Breast epithelium (tissue), 4 donors: ENCODE measurements at regions of chr3 and their contacts with region 1.

Region 1: DNA sequence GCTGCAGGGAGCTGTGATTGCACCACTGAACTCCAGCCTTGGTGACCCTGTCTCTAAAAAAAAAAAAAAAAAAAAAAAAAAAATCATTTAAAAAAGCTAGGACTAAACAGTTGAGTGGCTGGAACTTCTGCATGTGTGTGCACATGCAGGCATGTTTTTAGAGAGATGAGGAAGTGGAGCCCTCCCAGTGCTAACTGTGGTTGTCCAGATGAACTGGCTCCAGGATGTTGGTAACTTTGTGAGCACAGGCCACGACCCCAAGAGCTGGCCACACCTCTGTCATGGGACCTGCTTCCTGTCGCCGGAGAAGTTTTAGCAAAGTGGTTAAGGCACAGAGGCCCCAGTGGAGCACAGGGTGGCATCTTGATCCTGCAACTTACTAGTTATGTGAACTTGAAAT is 27.0 kb downstream of the CHCHD6 start:
- DNase-seq: no peak
- H3K4me3 ChIP-seq: no peak overlapping the region
- H3K27ac ChIP-seq: no peak overlapping the region
- H3K4me1 ChIP-seq: no peaks in the 10 kb centered on the region
- H3K27me3 ChIP-seq: no peaks in the 10 kb centered on the region
- CTCF ChIP-seq: no peak
- POLR2A ChIP-seq: no peak

Region 2: GRCh38 chr3:126752303-126752842 is 21.3 kb after region 1 on chr3:
- intact Hi-C with region 1: no loop called
- DNase-seq: peak; percentile 72 to 79
- H3K4me3 ChIP-seq: no peak overlapping the region
- H3K27ac ChIP-seq: peak overlapping the region; percentile 53 to 76
- H3K4me1 ChIP-seq: no peaks in the 10 kb centered on the region
- H3K27me3 ChIP-seq: no peaks in the 10 kb centered on the region
- CTCF ChIP-seq: peak; percentile 50 to 87 (median 82)
- POLR2A ChIP-seq: no peak

Region 3: GRCh38 chr3:128684986-128685726 is 1954.1 kb after region 1 on chr3:
- intact Hi-C with region 1: loop called (anchors 5 kb)
- DNase-seq: no peak
- H3K4me3 ChIP-seq: no peak overlapping the region
- H3K27ac ChIP-seq: no peak overlapping the region
- H3K4me1 ChIP-seq: no peaks in the 10 kb centered on the region
- H3K27me3 ChIP-seq: no peaks in the 10 kb centered on the region
- CTCF ChIP-seq: no peak
- POLR2A ChIP-seq: no peak